ENCODE measurements at regions of chr10 and their contacts with region 1.

Region 1: GRCh38 chr10:84352251-84352842 is 24.0 kb downstream of the CCSER2 start:
- DNase-seq: peak; percentile 49
- H3K4me3 Mint-ChIP-seq: no peak overlapping the region
- H3K27ac Mint-ChIP-seq: no peak overlapping the region
- H3K4me1 Mint-ChIP-seq: peaks cover 65% of the 10 kb centered on the region
- H3K27me3 Mint-ChIP-seq: no peaks in the 10 kb centered on the region

Region 2: GRCh38 chr10:83283151-83283550 is 1069.2 kb before region 1 on chr10:
- intact Hi-C with region 1: no loop called
- DNase-seq: no peak
- H3K4me3 Mint-ChIP-seq: no peak overlapping the region
- H3K27ac Mint-ChIP-seq: no peak overlapping the region
- H3K4me1 Mint-ChIP-seq: no peaks in the 10 kb centered on the region
- H3K27me3 Mint-ChIP-seq: no peaks in the 10 kb centered on the region

Region 3: DNA sequence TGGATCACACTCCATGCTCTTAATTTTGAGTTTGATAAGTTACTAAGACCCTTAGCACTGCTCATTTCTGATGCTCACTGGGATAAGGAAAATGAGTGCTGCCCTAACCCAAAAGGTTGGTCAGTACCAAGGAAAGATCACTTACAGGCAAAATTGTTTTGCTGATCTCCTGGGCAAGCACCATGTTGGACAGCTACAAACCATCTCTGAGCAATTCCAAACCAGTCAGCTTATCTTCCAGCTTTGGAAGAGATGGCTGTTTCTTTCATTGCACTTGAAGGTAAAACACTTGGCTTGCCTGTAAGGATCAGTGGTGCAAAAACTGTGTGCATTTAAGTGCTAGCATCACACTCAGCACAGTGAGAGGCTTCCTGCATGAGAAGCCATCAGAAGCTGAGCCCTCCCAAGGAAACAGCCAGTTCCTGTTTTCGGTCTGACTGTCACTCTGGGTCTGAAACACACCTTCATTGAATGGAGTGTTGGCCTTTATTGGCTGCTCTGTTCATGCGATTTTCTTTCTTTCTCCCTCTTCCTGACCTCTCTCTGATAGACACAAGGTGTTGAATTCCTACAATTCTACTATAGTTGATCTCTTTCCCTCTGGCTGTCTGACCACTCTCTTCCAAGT is 339.4 kb before region 1 on chr10:
- intact Hi-C with region 1: no loop called
- DNase-seq: no peak
- H3K4me3 Mint-ChIP-seq: no peak overlapping the region
- H3K27ac Mint-ChIP-seq: no peak overlapping the region
- H3K4me1 Mint-ChIP-seq: peaks cover 6% of the 10 kb centered on the region
- H3K27me3 Mint-ChIP-seq: peaks cover 11% of the 10 kb centered on the region

Region 4: GRCh38 chr10:84375011-84375410 is 22.7 kb after region 1 on chr10:
- intact Hi-C with region 1: loop called (anchors 1 kb)
- DNase-seq: peak; percentile 22
- H3K4me3 Mint-ChIP-seq: no peak overlapping the region
- H3K27ac Mint-ChIP-seq: peak overlapping the region; percentile 12
- H3K4me1 Mint-ChIP-seq: peaks cover 30% of the 10 kb centered on the region
- H3K27me3 Mint-ChIP-seq: no peaks in the 10 kb centered on the region

Region 5: GRCh38 chr10:84429926-84430520 is 77.7 kb after region 1 on chr10:
- intact Hi-C with region 1: loop called (anchors 2 kb)
- DNase-seq: peak; percentile 29
- H3K4me3 Mint-ChIP-seq: no peak overlapping the region
- H3K27ac Mint-ChIP-seq: no peak overlapping the region
- H3K4me1 Mint-ChIP-seq: peaks cover 14% of the 10 kb centered on the region
- H3K27me3 Mint-ChIP-seq: no peaks in the 10 kb centered on the region